Heart right ventricle (tissue), 16 donors: ENCODE measurements at regions of chr7 and their contacts with region 1.

Region 1: GRCh38 chr7:100407285-100408180 is 21.0 kb downstream of the ZCWPW1 start:
- DNase-seq: peak in 1 of 2 donors; percentile 41
- ATAC-seq: peak in 5 of 8 donors; percentile 63 to 79 (median 70)
- H3K4me3 ChIP-seq: no peak overlapping the region
- H3K27ac ChIP-seq: no peak overlapping the region
- H3K4me1 ChIP-seq: peaks cover 0 to 3% (median 0%) of the 10 kb centered on the region in 9 donors
- H3K27me3 ChIP-seq: no peaks in the 10 kb centered on the region
- CTCF ChIP-seq: peak in 8 of 9 donors; percentile 41 to 76 (median 66)

Region 2: GRCh38 chr7:100358027-100358865 is 49.3 kb before region 1 on chr7 and contains the start of gene PILRB:
- intact Hi-C with region 1: loop called in 1 of 10 experiments (anchors 5 kb)
- DNase-seq: no peak
- ATAC-seq: peak in 1 of 8 donors; percentile 11
- H3K4me3 ChIP-seq: peak within 1 kb of the TSS in 1 of 10 donors; percentile 32
- H3K27ac ChIP-seq: peak within 1 kb of the TSS in 2 of 10 donors; percentile 40 to 83
- H3K4me1 ChIP-seq: no peaks in the 10 kb centered on the region
- H3K27me3 ChIP-seq: no peaks in the 10 kb centered on the region
- CTCF ChIP-seq: peak in 1 of 9 donors; percentile 10
- total RNA-seq, gene PILRB: 7.3 to 15.5 (median 10.5) TPM

Region 3: DNA sequence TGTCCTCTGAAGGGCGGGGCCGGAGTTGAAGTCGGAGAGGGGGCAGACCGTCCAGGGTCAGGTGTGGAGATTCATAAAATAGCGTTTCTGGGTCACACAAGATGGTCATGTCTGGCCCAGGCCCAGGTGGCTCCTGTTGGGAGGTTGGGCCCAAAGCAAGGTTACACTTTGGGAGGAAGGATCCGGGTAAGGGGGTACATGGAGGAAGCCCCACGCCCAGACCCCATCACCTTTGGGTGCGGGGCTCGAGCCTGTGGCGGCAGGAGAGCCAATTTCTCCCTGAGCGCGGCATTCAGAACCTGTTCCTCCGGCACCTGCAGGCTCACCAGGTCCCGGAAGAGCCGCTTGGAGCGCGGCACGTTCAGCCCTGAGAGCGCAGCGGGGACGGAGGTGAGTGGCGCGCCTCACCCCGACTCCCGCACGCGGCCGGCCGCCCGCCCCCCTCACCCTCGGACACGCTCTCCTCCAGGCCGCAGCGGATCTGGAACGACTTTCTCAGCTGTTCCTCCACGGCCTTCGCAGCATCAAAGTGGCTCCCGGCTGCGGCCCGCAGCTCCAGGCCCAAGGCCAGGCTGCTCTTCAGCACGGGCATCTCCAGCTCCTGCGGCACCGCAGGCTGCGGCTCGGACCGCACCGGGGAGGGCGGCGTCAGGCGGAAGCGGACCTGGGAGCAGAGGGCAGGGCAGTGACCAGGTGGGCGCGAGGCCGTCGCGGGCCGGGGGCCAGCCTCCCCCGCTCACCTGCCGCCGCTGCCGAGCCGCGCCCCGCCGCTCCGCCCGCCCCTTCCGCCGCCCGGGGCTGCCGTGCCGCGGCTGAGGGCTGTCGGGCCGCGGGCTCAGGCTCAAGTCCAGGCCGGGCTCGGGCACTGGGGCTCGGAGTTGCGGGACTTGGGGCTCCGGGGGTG is 28.1 kb after region 1 on chr7:
- intact Hi-C with region 1: no loop called
- DNase-seq: peak; percentile 29 to 42
- ATAC-seq: peak in 6 of 8 donors; percentile 14 to 51 (median 32)
- H3K4me3 ChIP-seq: peak overlapping the region; percentile 62 to 98 (median 91)
- H3K27ac ChIP-seq: peak overlapping the region; percentile 91 to 99 (median 97)
- H3K4me1 ChIP-seq: peaks cover 9 to 54% (median 34%) of the 10 kb centered on the region in 9 donors
- H3K27me3 ChIP-seq: no peaks in the 10 kb centered on the region
- CTCF ChIP-seq: no peak

Region 4: GRCh38 chr7:100691676-100692577 is 284.4 kb after region 1 on chr7:
- intact Hi-C with region 1: no loop called
- DNase-seq: peak; percentile 81 to 83
- ATAC-seq: peak; percentile 72 to 92 (median 86)
- H3K4me3 ChIP-seq: peak overlapping the region in 9 of 10 donors; percentile 3 to 99 (median 80)
- H3K27ac ChIP-seq: peak overlapping the region in 6 of 10 donors; percentile 15 to 87 (median 46)
- H3K4me1 ChIP-seq: peaks cover 34 to 67% (median 51%) of the 10 kb centered on the region in 9 donors
- H3K27me3 ChIP-seq: no peaks in the 10 kb centered on the region
- CTCF ChIP-seq: peak; percentile 70 to 92 (median 90)